ENCODE measurements at regions of chr7 and their contacts with region 1.

Region 1: GRCh38 chr7:29442146-29442545 is 121.5 kb upstream of the PRR15 start:
- DNase-seq: no peak
- ATAC-seq: peak; percentile 48; the same call in 1 of the 2 replicates
- H3K4me3 ChIP-seq: no peak overlapping the region
- H3K27ac ChIP-seq: no peak overlapping the region
- H3K4me1 ChIP-seq: no peaks in the 10 kb centered on the region
- H3K27me3 ChIP-seq: peaks cover 3% of the 10 kb centered on the region
- CTCF ChIP-seq: no peak

Region 2: DNA sequence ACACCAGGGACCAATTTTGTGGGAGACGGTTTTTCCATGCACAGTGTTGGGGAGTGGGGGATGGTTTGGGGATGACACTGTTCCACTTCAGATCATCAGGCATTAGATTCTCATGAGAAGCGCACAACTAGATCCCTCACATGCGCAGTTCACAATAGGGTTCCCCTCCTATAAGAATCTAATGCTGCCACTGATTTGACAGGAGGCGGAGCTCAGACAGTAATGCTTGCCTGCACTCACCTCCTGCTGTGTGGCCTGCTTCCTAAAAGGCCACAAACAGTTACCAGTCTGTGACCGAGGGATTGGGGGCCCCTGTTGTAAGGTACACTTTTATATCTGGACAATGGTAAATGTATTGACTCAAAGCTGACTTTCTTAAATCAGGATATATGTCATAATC is 438.4 kb before region 1 on chr7:
- CTCF ChIA-PET with region 1: no interaction called
- POLR2A ChIA-PET with region 1: interaction called, 16 read pairs
- in situ Hi-C with region 1: no loop called
- intact Hi-C with region 1: no loop called
- DNase-seq: no peak
- ATAC-seq: no peak
- H3K4me3 ChIP-seq: no peak overlapping the region
- H3K27ac ChIP-seq: no peak overlapping the region
- H3K4me1 ChIP-seq: no peaks in the 10 kb centered on the region
- H3K27me3 ChIP-seq: peaks cover 5% of the 10 kb centered on the region; the same call in 1 of the 2 replicates
- CTCF ChIP-seq: no peak

Region 3: GRCh38 chr7:30688718-30689221 is 1246.6 kb after region 1 on chr7:
- CTCF ChIA-PET with region 1: no interaction called
- POLR2A ChIA-PET with region 1: no interaction called
- in situ Hi-C with region 1: no loop called
- intact Hi-C with region 1: no loop called
- DNase-seq: no peak
- ATAC-seq: no peak
- H3K4me3 ChIP-seq: no peak overlapping the region
- H3K27ac ChIP-seq: no peak overlapping the region
- H3K4me1 ChIP-seq: no peaks in the 10 kb centered on the region
- H3K27me3 ChIP-seq: peaks cover 14% of the 10 kb centered on the region
- CTCF ChIP-seq: no peak

Measured in Panc1 (cell line).